ENCODE measurements at regions of chr1 and their contacts with region 1.

Region 1: DNA sequence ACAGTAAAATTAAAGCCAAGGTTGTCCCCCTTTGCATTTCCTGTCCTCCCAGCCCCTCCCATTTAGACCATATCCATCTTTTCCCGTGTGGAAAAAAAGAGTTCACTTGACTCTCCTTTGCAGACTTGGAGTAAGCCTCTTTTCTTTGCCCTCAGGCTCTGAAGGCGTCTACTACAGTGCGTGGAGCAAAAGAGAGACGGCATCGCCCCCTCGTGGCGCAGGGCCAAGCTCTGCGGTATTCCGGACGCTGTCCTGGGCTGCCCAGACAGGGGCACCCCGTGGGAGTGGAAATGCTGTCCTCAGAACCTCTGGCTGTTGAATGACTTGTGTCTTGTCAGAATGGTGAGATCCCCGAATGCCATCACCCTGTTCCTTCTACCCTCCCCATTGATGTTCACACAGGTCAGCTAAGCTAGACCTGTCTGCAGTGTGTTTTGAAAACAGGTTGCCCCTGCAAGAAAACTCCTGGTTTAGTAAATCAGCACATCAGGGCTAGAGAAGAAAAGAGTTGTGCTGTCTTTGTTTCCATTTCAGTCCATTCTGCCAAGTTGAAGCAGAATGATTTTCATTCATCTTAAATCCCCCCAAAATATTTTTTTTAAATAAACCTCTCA is 12.3 kb upstream of the GJA8 start:
- DNase-seq: no peak
- H3K4me3 ChIP-seq: no peak overlapping the region
- H3K27ac ChIP-seq: no peak overlapping the region
- H3K4me1 ChIP-seq: no peaks in the 10 kb centered on the region
- H3K27me3 ChIP-seq: peaks cover 0 to 4% (median 0%) of the 10 kb centered on the region in 3 donors
- CTCF ChIP-seq: no peak
- EP300 ChIP-seq: no peak
- POLR2A ChIP-seq: no peak

Region 2: GRCh38 chr1:147640553-147641165 is 249.6 kb before region 1 on chr1:
- intact Hi-C with region 1: loop called (anchors 5 kb)
- DNase-seq: no peak
- H3K4me3 ChIP-seq: no peak overlapping the region
- H3K27ac ChIP-seq: no peak overlapping the region
- H3K4me1 ChIP-seq: peaks cover 0 to 15% (median 9%) of the 10 kb centered on the region in 4 donors
- H3K27me3 ChIP-seq: no peaks in the 10 kb centered on the region
- CTCF ChIP-seq: peak; percentile 33 to 84 (median 56)
- EP300 ChIP-seq: no peak
- POLR2A ChIP-seq: no peak

Region 3: GRCh38 chr1:147723691-147724323 is 166.5 kb before region 1 on chr1:
- intact Hi-C with region 1: loop called (anchors 5 kb)
- DNase-seq: no peak
- H3K4me3 ChIP-seq: no peak overlapping the region
- H3K27ac ChIP-seq: no peak overlapping the region
- H3K4me1 ChIP-seq: no peaks in the 10 kb centered on the region
- H3K27me3 ChIP-seq: no peaks in the 10 kb centered on the region
- CTCF ChIP-seq: peak in 2 of 4 experiments; percentile 25 to 28
- EP300 ChIP-seq: no peak
- POLR2A ChIP-seq: no peak